Dendritic cell treated with granulocyte-macrophage colony-stimulating factor and Interleukin-4, amounts not matched to agents 40 ng/mL and 50 ng/mL, for 4 days (primary cell): ENCODE measurements at regions of chr18 and their contacts with region 1.

Region 1: GRCh38 chr18:12990967-12991838 is at the start of gene CEP192:
- H3K4me3 Mint-ChIP-seq: peak within 1 kb of the TSS; percentile 93
- H3K27ac Mint-ChIP-seq: peak within 1 kb of the TSS; percentile 87
- H3K4me1 Mint-ChIP-seq: peaks cover 16% of the 10 kb centered on the region
- H3K27me3 Mint-ChIP-seq: no peaks in the 10 kb centered on the region

Region 2: DNA sequence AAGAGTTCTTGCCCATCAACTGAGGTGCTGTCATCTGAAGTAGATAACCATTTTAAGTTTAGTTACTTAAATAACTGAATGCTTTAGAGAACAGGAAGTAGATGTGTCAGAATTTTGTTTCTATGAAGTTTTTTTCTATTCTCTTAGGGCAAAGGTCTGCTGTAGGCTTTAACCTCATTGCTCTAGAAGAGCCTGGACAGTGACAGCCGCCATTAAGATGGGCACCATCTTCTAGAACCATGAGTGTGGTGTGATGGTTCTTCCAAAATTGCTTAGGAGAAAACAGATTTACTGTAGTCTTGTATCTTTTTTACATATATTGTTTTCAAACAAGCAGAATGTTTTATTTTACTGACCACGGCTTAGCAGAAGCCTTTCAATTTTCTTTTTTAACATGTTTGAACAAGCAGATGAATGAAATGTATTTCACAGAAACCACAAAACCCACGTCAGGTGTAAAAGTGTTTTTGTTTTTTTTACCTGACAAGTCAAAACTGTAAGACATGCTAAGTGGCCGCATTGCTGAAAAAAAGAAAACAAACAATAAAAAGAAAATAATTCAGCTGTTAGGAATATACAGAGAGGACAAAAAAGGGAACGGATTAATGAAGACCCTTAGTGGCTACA is 505.6 kb before region 1 on chr18:
- intact Hi-C with region 1: no loop called
- H3K4me3 Mint-ChIP-seq: no peak overlapping the region
- H3K27ac Mint-ChIP-seq: no peak overlapping the region
- H3K4me1 Mint-ChIP-seq: no peaks in the 10 kb centered on the region
- H3K27me3 Mint-ChIP-seq: no peaks in the 10 kb centered on the region

Region 3: DNA sequence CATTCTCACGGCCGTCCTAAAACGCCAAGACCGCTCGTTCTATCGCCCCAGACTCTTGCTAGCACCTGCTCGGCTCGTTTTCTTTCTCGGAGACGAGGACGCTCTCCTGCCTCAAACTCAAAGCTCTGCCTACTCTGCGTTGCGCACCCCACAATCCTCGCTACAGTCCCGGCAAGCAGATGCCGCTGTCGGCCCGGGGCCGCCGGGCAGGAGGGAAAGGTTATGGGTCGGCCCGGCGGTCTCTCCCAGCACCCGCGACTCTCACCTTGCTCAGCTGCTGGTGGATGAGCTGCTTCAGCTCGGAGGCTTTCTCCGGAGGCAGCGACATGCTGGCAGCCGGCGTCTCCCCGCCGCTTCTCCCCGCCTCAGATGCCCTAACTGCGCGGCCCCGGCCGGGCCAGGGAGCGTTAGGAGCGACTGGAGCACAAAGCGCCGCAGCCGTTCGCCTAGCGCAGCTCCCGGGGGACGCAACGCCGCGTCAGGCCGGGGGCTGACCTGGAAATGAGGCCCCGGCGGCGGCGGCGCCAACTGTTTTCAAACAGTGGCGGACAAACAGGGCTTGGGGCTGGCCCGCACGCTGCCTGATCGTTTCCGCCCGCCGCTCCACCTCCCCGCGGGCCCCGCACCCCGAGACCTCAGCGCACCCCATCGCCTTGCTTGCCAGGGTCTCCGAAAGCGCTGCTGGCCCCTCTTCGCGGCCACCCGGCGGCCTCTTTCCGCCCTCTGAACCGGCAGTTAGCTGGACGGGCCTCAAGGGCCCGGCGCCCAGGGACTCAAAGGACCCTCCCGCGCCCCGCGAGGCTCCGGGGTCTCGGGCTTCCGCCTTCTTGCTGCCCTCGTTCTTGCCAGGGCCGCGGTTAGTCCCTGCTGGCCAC is 288.7 kb before region 1 on chr18 and contains the starts of genes CEP76 and PSMG2:
- intact Hi-C with region 1: loop called (anchors 2 kb)
- H3K4me3 Mint-ChIP-seq: peak within 1 kb of the TSS; percentile 89
- H3K27ac Mint-ChIP-seq: peak within 1 kb of the TSS; percentile 100
- H3K4me1 Mint-ChIP-seq: peaks cover 37% of the 10 kb centered on the region
- H3K27me3 Mint-ChIP-seq: no peaks in the 10 kb centered on the region

Region 4: DNA sequence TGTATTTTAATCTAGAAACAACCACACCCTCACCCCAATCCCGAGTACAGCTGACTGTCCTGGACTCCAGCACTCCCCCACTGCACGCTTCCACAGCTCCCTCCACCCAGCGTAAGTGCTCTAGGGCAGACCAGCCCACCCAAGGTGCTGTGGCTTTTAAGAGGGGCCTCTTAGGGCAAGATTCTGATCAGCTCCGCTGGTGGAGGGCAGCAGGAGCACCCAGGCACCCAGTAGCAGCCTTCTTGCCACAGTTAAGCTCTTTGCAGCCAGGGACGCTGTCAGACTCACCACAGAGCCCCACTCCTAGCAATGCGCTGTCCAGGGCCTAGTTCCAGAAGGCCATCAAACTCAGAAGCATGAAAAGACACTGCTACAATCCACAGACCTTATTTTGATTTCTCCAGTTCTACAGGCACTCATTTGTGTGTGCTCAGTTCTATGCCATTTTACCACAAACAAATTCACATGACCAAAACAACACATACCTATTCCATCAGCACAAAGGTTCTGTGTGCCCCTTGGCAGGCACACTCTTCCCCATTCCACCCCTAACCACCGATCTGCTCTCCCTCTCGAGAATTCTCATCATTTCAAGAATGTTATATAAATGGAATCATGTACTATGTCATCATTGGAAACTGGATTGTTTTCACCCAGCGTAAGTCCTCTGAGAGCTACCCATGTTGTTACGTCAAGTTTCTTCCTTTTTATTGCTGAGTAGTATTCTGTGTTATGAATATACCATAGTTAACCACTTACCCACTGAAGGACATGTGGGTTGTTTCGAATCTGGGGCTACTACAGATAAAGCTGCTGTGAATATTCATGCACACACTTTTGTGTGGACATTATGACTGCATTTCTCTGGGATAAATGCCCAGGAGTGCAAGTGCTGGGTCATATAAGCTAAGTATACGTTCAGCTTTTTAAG is 147.5 kb before region 1 on chr18:
- intact Hi-C with region 1: no loop called
- H3K4me3 Mint-ChIP-seq: no peak overlapping the region
- H3K27ac Mint-ChIP-seq: peak overlapping the region; percentile 97
- H3K4me1 Mint-ChIP-seq: peaks cover 81% of the 10 kb centered on the region
- H3K27me3 Mint-ChIP-seq: no peaks in the 10 kb centered on the region

Region 5: DNA sequence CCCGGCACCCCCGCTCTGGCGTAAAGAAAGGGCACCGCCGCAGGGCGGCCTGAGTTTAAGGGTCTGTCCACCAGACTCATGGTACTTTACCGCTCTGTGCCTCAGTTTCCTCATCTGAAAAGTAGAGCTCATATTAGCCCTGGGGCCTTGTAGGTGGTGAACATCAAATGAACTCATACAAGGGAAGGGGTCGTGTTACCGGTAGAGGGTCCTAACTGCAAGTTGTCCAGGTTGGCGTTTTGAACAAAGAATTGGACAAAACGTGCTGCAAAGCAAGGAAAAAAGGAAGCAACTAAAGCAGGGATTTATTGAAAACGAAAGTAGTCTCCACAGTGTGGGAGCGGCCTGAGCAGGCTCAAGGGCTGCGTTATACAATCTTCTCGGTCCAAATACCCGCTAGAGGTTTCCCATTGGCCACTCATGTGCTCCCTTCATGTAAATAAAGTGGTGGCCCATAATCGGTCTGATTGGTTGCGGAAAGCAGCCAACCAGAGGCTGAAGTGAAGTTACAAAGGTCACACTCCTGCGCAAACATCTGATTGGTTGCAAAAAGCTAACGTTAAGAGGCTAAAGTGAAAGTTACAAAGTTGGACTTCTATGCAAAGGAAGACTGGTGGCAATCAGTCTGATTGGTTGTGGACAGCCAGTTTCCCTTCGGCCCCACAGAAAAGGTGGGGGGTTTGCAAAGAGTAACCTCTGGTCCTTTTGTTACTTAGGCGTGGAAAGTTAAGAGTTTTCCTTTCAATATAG is 146.6 kb after region 1 on chr18:
- intact Hi-C with region 1: loop called (anchors 5 kb)
- H3K4me3 Mint-ChIP-seq: peak overlapping the region; percentile 92
- H3K27ac Mint-ChIP-seq: peak overlapping the region; percentile 98
- H3K4me1 Mint-ChIP-seq: peaks cover 23% of the 10 kb centered on the region
- H3K27me3 Mint-ChIP-seq: peaks cover 32% of the 10 kb centered on the region